ENCODE measurements at regions of chr5 and their contacts with region 1.

Region 1: DNA sequence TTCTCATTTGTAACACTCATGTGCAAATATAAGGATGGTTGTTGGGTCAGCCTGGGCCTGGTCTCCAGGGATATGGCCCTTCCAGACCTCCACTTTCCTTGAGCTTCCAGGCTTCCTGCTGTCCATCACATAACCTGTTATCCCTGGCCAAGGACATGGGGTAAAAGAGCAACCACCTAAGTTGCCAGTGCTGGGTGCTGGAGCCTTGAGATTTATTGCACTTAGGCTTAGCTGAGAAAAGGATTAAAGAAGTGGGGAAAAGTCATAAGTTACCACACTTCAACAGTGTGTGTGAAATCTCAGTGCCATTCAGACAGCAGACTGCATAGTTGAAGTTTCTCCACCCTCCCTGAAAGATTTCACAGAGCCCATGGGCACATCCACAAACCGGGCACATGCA is 58.6 kb upstream of the PANK3 start:
- DNase-seq: no peak
- H3K4me3 ChIP-seq: no peak overlapping the region
- H3K27ac ChIP-seq: no peak overlapping the region
- H3K27me3 ChIP-seq: no peaks in the 10 kb centered on the region
- CTCF ChIP-seq: no peak

Region 2: DNA sequence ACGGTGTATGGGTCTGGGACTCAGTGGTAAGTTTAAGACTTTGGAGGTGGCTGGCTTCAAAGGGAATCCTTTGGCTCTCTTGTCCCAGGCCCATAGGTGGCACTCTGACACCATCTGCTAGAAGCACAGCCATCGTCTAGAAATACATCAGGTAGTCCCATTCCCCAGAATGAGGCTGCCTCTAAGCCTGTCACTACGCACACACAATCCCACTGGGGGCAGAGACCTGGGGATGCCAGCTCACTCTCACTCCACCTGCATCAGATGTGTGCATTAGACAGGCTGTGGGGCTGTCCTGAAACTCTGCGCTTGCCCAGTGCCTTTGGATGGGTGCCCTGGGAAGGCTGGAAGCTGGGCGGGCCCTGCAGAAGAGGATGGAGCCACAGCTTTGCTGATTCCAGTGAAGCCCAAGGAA is 68.9 kb after region 1 on chr5:
- CTCF ChIA-PET with region 1: no interaction called
- POLR2A ChIA-PET with region 1: interaction called, 11 read pairs
- DNase-seq: no peak
- H3K4me3 ChIP-seq: no peak overlapping the region
- H3K27ac ChIP-seq: no peak overlapping the region
- H3K27me3 ChIP-seq: no peaks in the 10 kb centered on the region
- CTCF ChIP-seq: peak; percentile 65

Region 3: GRCh38 chr5:169080448-169080911 is 442.7 kb after region 1 on chr5:
- CTCF ChIA-PET with region 1: no interaction called
- POLR2A ChIA-PET with region 1: no interaction called
- DNase-seq: no peak
- H3K4me3 ChIP-seq: no peak overlapping the region
- H3K27ac ChIP-seq: no peak overlapping the region
- H3K27me3 ChIP-seq: no peaks in the 10 kb centered on the region
- CTCF ChIP-seq: no peak

Measured in AG04450 (cell line).